ENCODE measurements at regions of chr12 and their contacts with region 1.

Region 1: DNA sequence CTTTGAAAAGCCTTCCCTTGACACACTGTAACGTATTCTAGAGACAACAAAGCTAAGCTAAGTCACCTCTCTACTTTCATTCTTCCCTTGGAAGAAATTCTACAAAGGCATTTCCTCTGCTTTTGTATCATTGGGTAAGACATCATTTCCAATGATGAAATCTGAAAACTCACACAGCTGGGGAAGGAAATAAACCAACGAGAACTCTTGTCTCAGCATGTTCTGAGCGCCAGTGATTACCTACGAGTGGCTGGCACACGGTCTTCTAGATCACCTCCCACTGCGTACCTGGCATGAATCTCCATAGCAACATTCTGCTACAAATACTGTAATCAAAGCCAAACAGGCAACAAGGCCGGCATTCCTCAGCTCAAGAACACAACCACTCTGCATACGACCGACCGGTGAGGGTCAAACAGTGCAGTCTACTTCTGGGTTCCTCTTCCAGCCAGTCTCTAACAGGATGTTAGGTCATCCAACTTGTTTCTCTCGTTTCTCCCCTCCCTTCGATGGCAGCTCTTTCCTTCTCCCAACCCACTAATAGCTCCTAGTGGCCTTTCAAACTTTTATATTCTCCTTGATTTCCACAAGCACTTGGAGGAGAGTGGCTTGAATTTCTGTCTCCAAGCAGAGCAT is 7.6 kb downstream of the VPS37B start:
- DNase-seq: peak; percentile 90
- ATAC-seq: peak; percentile 45
- H3K4me3 ChIP-seq: peak overlapping the region; percentile 48
- H3K27ac ChIP-seq: peak overlapping the region; percentile 90
- H3K4me1 ChIP-seq: peaks cover 92% of the 10 kb centered on the region
- H3K27me3 ChIP-seq: no peaks in the 10 kb centered on the region
- CTCF ChIP-seq: no peak

Region 2: GRCh38 chr12:122813310-122813713 is 75.0 kb before region 1 on chr12:
- CTCF ChIA-PET with region 1: no interaction called
- POLR2A ChIA-PET with region 1: no interaction called
- intact Hi-C with region 1: no loop called
- DNase-seq: no peak
- ATAC-seq: no peak
- H3K4me3 ChIP-seq: no peak overlapping the region
- H3K27ac ChIP-seq: no peak overlapping the region
- H3K4me1 ChIP-seq: peaks cover 3% of the 10 kb centered on the region; the same call in 1 of the 2 replicates
- H3K27me3 ChIP-seq: no peaks in the 10 kb centered on the region
- CTCF ChIP-seq: no peak

Region 3: GRCh38 chr12:122946690-122947341 is 58.5 kb after region 1 on chr12:
- CTCF ChIA-PET with region 1: no interaction called
- POLR2A ChIA-PET with region 1: interaction called, 7 read pairs
- intact Hi-C with region 1: loop called (anchors 2 kb)
- DNase-seq: peak; percentile 99
- ATAC-seq: peak; percentile 84
- H3K4me3 ChIP-seq: no peak overlapping the region
- H3K27ac ChIP-seq: peak overlapping the region; percentile 94
- H3K4me1 ChIP-seq: peaks cover 65% of the 10 kb centered on the region
- H3K27me3 ChIP-seq: no peaks in the 10 kb centered on the region
- CTCF ChIP-seq: peak; percentile 71

Region 4: GRCh38 chr12:122981047-122981918 is 92.9 kb after region 1 on chr12:
- CTCF ChIA-PET with region 1: no interaction called
- POLR2A ChIA-PET with region 1: no interaction called
- intact Hi-C with region 1: no loop called
- DNase-seq: peak; percentile 17
- ATAC-seq: peak; percentile 8
- H3K4me3 ChIP-seq: peak overlapping the region; percentile 85
- H3K27ac ChIP-seq: peak overlapping the region; percentile 41
- H3K4me1 ChIP-seq: peaks cover 24% of the 10 kb centered on the region
- H3K27me3 ChIP-seq: no peaks in the 10 kb centered on the region
- CTCF ChIP-seq: no peak